ENCODE measurements at regions of chr7 and their contacts with region 1.

Region 1: GRCh38 chr7:92528188-92528957 is at the starts of genes PEX1 and RBM48:
- DNase-seq: peak; percentile 99
- H3K4me3 ChIP-seq: peak within 1 kb of the TSS; percentile 76 to 99 (median 98)
- H3K27ac ChIP-seq: peak within 1 kb of the TSS; percentile 86
- H3K4me1 ChIP-seq: no peaks in the 10 kb centered on the region
- H3K27me3 ChIP-seq: no peaks in the 10 kb centered on the region
- CTCF ChIP-seq: peak; percentile 11 to 40
- total RNA-seq, gene PEX1: 14.4 to 24.2 TPM
- total RNA-seq, gene RBM48: 9.0 to 9.8 TPM

Region 2: DNA sequence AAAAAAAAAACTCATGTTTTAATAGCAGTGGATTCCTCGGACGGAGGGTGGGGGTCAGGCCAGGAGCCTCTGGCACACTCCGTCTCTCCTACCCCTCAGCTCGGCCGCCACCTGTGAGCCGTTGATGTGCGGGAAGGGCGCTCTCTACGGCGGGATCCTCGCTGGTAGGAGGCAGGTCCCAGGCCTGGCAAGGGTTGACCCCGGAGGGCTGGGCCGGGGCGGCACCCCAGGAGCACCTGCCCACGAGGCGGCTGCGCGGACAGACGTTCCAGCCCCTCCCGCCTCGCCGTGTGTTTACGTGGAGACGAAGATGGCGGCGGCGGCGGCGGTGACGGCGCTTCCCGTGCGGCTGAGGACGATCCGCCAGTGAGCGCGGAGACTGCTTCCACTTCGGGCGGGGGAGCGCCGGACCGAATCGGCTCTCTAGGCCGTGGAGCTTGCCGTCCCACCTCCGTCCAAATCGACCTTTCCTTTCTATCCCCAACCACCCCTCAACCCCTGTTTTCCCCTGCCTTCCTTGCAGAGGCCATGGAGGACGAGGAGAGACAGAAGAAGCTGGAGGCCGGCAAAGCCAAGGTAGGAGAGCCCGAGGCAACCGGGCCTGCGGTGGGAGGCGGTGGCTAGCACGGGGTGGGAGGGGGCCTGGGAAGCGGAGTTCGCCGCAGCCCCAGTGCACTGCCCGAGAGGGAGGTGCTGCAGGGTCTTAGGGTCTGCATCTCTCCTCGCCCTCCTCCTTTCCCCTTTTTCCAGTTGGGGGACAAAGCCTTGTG is 587.6 kb before region 1 on chr7 and contains the start of gene AKAP9:
- CTCF ChIA-PET with region 1: no interaction called
- dilution Hi-C with region 1: no loop called
- in situ Hi-C with region 1: no loop called
- intact Hi-C with region 1: loop called (anchors 2 kb)
- DNase-seq: peak; percentile 86
- H3K4me3 ChIP-seq: peak within 1 kb of the TSS; percentile 80 to 95 (median 91)
- H3K27ac ChIP-seq: peak within 1 kb of the TSS; percentile 81
- H3K4me1 ChIP-seq: peaks cover 6% of the 10 kb centered on the region
- H3K27me3 ChIP-seq: no peaks in the 10 kb centered on the region
- CTCF ChIP-seq: no peak
- total RNA-seq, gene AKAP9: 34.8 to 42.1 TPM

Region 3: GRCh38 chr7:92557249-92557648 is 28.9 kb after region 1 on chr7:
- CTCF ChIA-PET with region 1: interaction called, 10 read pairs
- dilution Hi-C with region 1: no loop called
- in situ Hi-C with region 1: no loop called
- intact Hi-C with region 1: no loop called
- DNase-seq: no peak
- H3K4me3 ChIP-seq: no peak overlapping the region
- H3K27ac ChIP-seq: no peak overlapping the region
- H3K4me1 ChIP-seq: no peaks in the 10 kb centered on the region
- H3K27me3 ChIP-seq: no peaks in the 10 kb centered on the region
- CTCF ChIP-seq: no peak

Region 4: GRCh38 chr7:92590711-92591310 is 62.4 kb after region 1 on chr7:
- CTCF ChIA-PET with region 1: interaction called, 3 read pairs
- dilution Hi-C with region 1: no loop called
- in situ Hi-C with region 1: no loop called
- intact Hi-C with region 1: loop called (anchors 1 kb)
- DNase-seq: no peak
- H3K4me3 ChIP-seq: peak overlapping the region; percentile 84 to 97 (median 85)
- H3K27ac ChIP-seq: no peak overlapping the region
- H3K4me1 ChIP-seq: peaks cover 15% of the 10 kb centered on the region
- H3K27me3 ChIP-seq: no peaks in the 10 kb centered on the region
- CTCF ChIP-seq: no peak

Region 5: GRCh38 chr7:92609921-92610518 is 81.6 kb after region 1 on chr7:
- CTCF ChIA-PET with region 1: interaction called, 5 read pairs
- dilution Hi-C with region 1: no loop called
- in situ Hi-C with region 1: no loop called
- intact Hi-C with region 1: loop called (anchors 1 kb)
- DNase-seq: no peak
- H3K4me3 ChIP-seq: no peak overlapping the region
- H3K27ac ChIP-seq: no peak overlapping the region
- H3K4me1 ChIP-seq: no peaks in the 10 kb centered on the region
- H3K27me3 ChIP-seq: no peaks in the 10 kb centered on the region
- CTCF ChIP-seq: peak; percentile 27 to 40

Measured in mammary epithelial cell (primary cell).